Heart left ventricle (tissue), 16 donors: ENCODE measurements at regions of chr13 and their contacts with region 1.

Region 1: DNA sequence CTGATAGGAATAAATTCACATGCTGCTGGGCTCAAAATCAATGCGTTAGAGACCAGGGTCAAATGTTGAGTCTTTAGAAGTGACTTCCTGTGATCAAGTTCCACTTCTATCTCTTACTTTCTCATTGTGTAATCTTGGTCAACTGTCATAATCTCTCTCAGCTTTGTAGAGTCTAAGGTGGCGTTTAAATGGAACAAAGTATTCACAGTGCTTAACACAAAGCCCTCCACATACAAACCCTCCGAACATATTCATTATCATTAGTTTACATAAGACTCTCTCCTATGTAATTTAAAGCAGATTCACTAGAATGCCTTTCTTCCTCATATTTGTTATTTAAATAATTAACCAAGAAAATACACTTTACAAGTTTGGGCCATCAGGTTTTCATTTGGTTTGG is 1044.1 kb downstream of the EFNB2 start:
- DNase-seq: no peak
- ATAC-seq: no peak
- H3K4me3 ChIP-seq: no peak overlapping the region
- H3K27ac ChIP-seq: no peak overlapping the region
- H3K4me1 ChIP-seq: no peaks in the 10 kb centered on the region
- H3K27me3 ChIP-seq: no peaks in the 10 kb centered on the region
- CTCF ChIP-seq: no peak
- POLR2A ChIP-seq: no peak

Region 2: GRCh38 chr13:105502193-105502592 is 10.8 kb after region 1 on chr13:
- intact Hi-C with region 1: loop called in 1 of 10 experiments (anchors 2 kb)
- DNase-seq: no peak
- ATAC-seq: no peak
- H3K4me3 ChIP-seq: no peak overlapping the region
- H3K27ac ChIP-seq: no peak overlapping the region
- H3K4me1 ChIP-seq: no peaks in the 10 kb centered on the region
- H3K27me3 ChIP-seq: no peaks in the 10 kb centered on the region
- CTCF ChIP-seq: no peak
- POLR2A ChIP-seq: no peak

Region 3: GRCh38 chr13:105538346-105538745 is 47.0 kb after region 1 on chr13:
- intact Hi-C with region 1: no loop called
- DNase-seq: no peak
- ATAC-seq: no peak
- H3K4me3 ChIP-seq: no peak overlapping the region
- H3K27ac ChIP-seq: no peak overlapping the region
- H3K4me1 ChIP-seq: no peaks in the 10 kb centered on the region
- H3K27me3 ChIP-seq: no peaks in the 10 kb centered on the region
- CTCF ChIP-seq: no peak
- POLR2A ChIP-seq: no peak

Region 4: GRCh38 chr13:105878119-105878700 is 386.9 kb after region 1 on chr13:
- intact Hi-C with region 1: no loop called
- DNase-seq: no peak
- ATAC-seq: peak in 1 of 4 donors; percentile 61
- H3K4me3 ChIP-seq: no peak overlapping the region
- H3K27ac ChIP-seq: no peak overlapping the region
- H3K4me1 ChIP-seq: no peaks in the 10 kb centered on the region
- H3K27me3 ChIP-seq: no peaks in the 10 kb centered on the region
- CTCF ChIP-seq: no peak
- POLR2A ChIP-seq: no peak